ENCODE measurements at regions of chr4 and their contacts with region 1.

Region 1: DNA sequence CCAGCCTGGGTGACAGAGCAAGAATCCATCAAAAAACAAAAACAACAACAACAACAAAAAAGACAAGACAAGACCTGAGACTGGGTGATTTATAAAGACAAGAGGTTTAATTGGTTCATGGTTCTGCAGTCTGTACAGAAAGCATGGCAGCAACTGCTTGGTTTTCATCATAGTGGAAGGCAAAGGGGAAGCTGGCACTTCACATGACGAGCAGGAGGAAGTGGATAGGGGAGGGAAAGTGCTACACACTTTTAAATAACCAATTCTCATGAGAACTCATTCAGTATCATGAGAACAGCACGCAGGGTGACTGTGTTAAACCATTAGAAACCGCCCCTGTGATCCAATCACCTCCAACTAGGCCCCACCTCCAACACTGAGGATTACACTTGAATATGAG is 28.4 kb upstream of the SLC10A7 start:
- DNase-seq: no peak
- H3K4me3 ChIP-seq: no peak overlapping the region
- H3K27ac ChIP-seq: no peak overlapping the region
- H3K4me1 ChIP-seq: no peaks in the 10 kb centered on the region
- H3K27me3 ChIP-seq: no peaks in the 10 kb centered on the region
- CTCF ChIP-seq: no peak

Region 2: GRCh38 chr4:146699910-146700309 is 149.7 kb after region 1 on chr4:
- CTCF ChIA-PET with region 1: interaction called, 26 read pairs
- dilution Hi-C with region 1: no loop called
- in situ Hi-C with region 1: no loop called
- intact Hi-C with region 1: no loop called
- DNase-seq: no peak
- H3K4me3 ChIP-seq: no peak overlapping the region
- H3K27ac ChIP-seq: no peak overlapping the region
- H3K4me1 ChIP-seq: no peaks in the 10 kb centered on the region
- H3K27me3 ChIP-seq: peaks cover 5% of the 10 kb centered on the region
- CTCF ChIP-seq: no peak

Measured in mammary epithelial cell (primary cell).